ENCODE measurements at regions of chr3 and their contacts with region 1.

Region 1: GRCh38 chr3:44529927-44530326 is 25.1 kb upstream of the ZKSCAN7 start:
- DNase-seq: no peak
- H3K4me3 ChIP-seq: no peak overlapping the region
- H3K27ac ChIP-seq: no peak overlapping the region
- H3K27me3 ChIP-seq: peaks cover 0 to 22% (median 0%) of the 10 kb centered on the region in 45 donors
- CTCF ChIP-seq: peak in 5 of 56 donors; percentile 7 to 18 (median 10)

Region 2: GRCh38 chr3:44363591-44363990 is 166.3 kb before region 1 on chr3:
- intact Hi-C with region 1: no loop called
- DNase-seq: no peak
- H3K4me3 ChIP-seq: no peak overlapping the region
- H3K27ac ChIP-seq: no peak overlapping the region
- H3K27me3 ChIP-seq: no peaks in the 10 kb centered on the region
- CTCF ChIP-seq: no peak

Region 3: DNA sequence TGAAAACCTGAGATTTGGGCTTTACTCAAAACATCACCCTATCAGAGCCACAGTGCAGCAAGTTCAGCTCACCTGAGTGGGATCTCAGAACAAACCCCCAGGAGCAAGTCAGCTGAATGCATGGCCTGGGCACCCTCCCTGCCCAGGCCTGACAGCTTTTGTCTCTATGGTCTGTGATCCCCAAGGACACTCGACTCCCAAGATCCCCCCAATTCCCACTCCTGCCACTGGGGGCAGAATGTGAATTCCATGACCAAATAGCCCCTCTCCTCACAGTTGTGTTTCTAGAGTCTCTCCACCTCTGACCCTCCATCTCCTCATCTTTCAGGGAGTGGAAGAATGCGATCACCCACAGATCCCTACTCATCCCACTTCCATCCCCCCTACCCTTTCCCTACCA is 111.4 kb before region 1 on chr3:
- intact Hi-C with region 1: no loop called
- DNase-seq: no peak
- H3K4me3 ChIP-seq: no peak overlapping the region
- H3K27ac ChIP-seq: no peak overlapping the region
- H3K27me3 ChIP-seq: no peaks in the 10 kb centered on the region
- CTCF ChIP-seq: peak in 8 of 56 donors; percentile 5 to 30 (median 16)

Region 4: DNA sequence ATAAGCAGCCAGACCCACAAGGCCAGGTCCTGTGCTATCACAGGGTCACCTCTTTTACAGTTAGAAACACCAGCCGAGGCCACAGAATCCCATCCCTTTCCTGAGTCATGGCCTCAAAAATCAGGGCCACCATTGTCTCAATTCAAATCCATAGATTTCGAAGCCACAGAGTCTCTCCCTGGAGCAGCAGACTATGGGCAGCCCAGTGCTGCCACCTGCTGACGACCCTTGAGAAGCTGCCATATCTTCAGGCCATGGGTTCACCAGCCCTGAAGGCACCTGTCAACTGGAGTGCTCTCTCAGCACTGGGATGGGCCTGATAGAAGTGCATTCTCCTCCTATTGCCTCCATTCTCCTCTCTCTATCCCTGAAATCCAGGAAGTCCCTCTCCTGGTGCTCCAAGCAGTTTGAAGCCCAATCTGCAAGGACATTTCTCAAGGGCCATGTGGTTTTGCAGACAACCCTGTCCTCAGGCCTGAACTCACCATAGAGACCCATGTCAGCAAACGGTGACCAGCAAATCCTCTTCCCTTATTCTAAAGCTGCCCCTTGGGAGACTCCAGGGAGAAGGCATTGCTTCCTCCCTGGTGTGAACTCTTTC is 384.0 kb after region 1 on chr3:
- intact Hi-C with region 1: loop called (anchors 1 to 10 kb)
- DNase-seq: peak in 9 of 10 donors; percentile 28 to 70 (median 56)
- H3K4me3 ChIP-seq: no peak overlapping the region
- H3K27ac ChIP-seq: no peak overlapping the region
- H3K27me3 ChIP-seq: no peaks in the 10 kb centered on the region
- CTCF ChIP-seq: peak; percentile 43 to 85 (median 76)

Measured in dorsolateral prefrontal cortex (tissue), 120 donors.